Stomach (tissue), 19 donors: ENCODE measurements at regions of chr11 and their contacts with region 1.

Region 1: GRCh38 chr11:121318848-121319834 is 26.6 kb downstream of the SC5D start:
- DNase-seq: peak in 1 of 2 donors; percentile 75
- H3K4me3 ChIP-seq: no peak overlapping the region
- H3K27ac ChIP-seq: no peak overlapping the region
- H3K4me1 ChIP-seq: no peaks in the 10 kb centered on the region
- H3K27me3 ChIP-seq: peaks cover 0 to 11% (median 0%) of the 10 kb centered on the region in 3 donors
- CTCF ChIP-seq: peak in 5 of 7 experiments; percentile 62 to 83 (median 73)
- EP300 ChIP-seq: no peak
- POLR2A ChIP-seq: no peak

Region 2: DNA sequence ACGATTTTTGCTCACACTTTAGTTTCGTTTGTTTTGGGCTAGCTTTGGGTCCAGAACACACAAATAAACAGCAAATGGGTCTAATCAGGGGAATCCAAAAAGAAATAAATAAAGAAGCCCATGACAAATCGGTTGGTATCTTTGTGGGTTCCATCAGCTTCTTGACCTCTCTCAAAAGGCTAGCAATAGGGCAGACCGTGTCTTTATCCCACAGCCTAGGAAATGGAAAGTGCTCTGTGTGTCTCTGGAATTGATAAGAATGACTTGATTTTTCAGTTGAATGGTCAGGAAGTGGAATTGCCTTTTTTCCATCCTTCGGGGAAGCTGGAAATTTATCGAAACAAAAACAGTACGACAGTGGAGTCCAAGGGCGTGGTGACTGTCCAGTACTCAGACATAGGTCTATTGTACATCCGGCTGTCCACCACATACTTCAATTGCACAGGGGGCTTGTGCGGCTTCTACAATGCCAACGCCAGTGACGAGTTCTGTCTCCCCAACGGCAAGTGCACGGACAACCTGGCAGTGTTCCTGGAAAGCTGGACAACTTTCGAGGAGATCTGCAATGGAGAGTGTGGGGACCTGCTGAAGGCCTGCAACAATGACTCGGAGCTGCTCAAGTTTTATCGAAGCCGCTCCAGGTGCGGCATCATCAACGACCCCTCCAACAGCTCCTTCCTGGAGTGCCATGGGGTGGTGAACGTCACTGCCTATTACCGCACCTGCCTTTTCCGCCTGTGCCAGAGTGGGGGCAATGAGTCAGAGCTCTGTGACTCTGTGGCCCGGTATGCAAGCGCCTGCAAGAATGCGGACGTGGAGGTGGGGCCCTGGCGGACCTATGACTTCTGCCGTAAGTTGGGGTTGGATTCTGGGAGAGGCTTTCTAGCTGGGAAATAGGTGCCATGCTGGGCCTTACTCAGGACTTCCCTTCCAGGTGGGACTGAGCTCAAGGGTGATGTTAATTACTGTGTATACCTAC is 189.5 kb before region 1 on chr11:
- intact Hi-C with region 1: no loop called
- DNase-seq: no peak
- H3K4me3 ChIP-seq: no peak overlapping the region
- H3K27ac ChIP-seq: no peak overlapping the region
- H3K4me1 ChIP-seq: no peaks in the 10 kb centered on the region
- H3K27me3 ChIP-seq: no peaks in the 10 kb centered on the region
- CTCF ChIP-seq: no peak
- EP300 ChIP-seq: no peak
- POLR2A ChIP-seq: no peak

Region 3: GRCh38 chr11:121358760-121359159 is 39.6 kb after region 1 on chr11:
- intact Hi-C with region 1: no loop called
- DNase-seq: no peak
- H3K4me3 ChIP-seq: no peak overlapping the region
- H3K27ac ChIP-seq: peak overlapping the region in 2 of 5 donors; percentile 35 to 69
- H3K4me1 ChIP-seq: peaks cover 0 to 9% (median 3%) of the 10 kb centered on the region in 4 donors
- H3K27me3 ChIP-seq: no peaks in the 10 kb centered on the region
- CTCF ChIP-seq: no peak
- EP300 ChIP-seq: no peak
- POLR2A ChIP-seq: no peak

Region 4: DNA sequence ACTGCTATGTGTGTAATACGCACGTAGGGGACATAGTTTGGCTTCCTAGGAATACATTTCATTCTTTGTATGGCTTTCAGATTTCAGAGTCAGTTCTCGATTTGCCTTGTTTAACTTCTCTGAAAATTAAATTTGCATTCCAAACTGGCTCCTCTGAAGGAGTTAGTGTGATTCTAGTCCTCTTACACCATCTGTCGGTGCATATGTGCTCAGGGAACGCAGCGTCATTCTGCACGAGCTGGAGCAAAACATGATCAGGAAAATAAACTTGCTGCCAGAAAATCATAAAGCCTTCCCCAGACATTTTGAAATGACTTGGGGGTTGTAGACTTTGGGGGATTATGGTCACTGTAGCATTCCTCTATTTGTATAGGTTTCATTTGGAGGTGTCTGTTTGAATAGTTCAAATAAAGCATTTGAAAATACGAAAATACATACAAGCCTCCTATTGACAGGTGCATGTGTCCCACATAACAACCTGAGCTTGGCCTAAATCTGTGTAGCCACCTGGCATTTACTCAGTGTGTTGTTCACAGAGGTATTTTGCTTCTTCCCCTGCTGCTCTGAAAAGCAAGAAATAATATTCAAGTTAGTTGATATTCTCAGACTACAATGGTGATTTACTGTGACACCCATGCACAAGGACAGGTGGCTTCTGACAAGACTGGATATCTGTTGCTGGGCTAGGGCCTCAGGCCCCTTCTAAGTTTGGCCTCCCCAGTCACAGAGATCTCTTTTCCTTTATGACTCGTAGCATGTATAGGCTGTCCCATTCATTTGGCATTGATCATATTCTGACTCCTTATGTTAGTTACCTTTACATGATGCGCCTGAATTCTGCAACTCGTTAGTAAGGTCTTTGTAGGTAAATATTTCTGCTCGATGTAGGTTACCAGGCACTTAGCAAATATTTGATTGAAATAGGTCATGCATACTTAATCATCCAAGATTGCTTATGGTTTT is 215.3 kb after region 1 on chr11:
- intact Hi-C with region 1: loop called (anchors 10 kb)
- DNase-seq: peak; percentile 46 to 69
- H3K4me3 ChIP-seq: no peak overlapping the region
- H3K27ac ChIP-seq: no peak overlapping the region
- H3K4me1 ChIP-seq: no peaks in the 10 kb centered on the region
- H3K27me3 ChIP-seq: no peaks in the 10 kb centered on the region
- CTCF ChIP-seq: peak in 3 of 7 experiments; percentile 33 to 53 (median 35)
- EP300 ChIP-seq: no peak
- POLR2A ChIP-seq: no peak

Region 5: GRCh38 chr11:121591405-121592033 is 272.4 kb after region 1 on chr11:
- intact Hi-C with region 1: loop called (anchors 5 kb)
- DNase-seq: peak; percentile 70 to 92
- H3K4me3 ChIP-seq: no peak overlapping the region
- H3K27ac ChIP-seq: no peak overlapping the region
- H3K4me1 ChIP-seq: peaks cover 0 to 6% (median 0%) of the 10 kb centered on the region in 4 donors
- H3K27me3 ChIP-seq: no peaks in the 10 kb centered on the region
- CTCF ChIP-seq: peak in 5 of 7 experiments; percentile 76 to 86 (median 77)
- EP300 ChIP-seq: no peak
- POLR2A ChIP-seq: no peak